Activated B cell treated with CpG ODN at 0.5 μM for 24 hours (primary cell): ENCODE measurements at regions of chr2 and their contacts with region 1.

Region 1: GRCh38 chr2:157468931-157469708 is 25.2 kb upstream of the CYTIP start:
- DNase-seq: no peak
- ATAC-seq: peak; percentile 81
- H3K4me3 Mint-ChIP-seq: peak overlapping the region; percentile 81
- H3K27ac Mint-ChIP-seq: peak overlapping the region; percentile 99
- H3K4me1 Mint-ChIP-seq: peaks cover 87% of the 10 kb centered on the region
- H3K27me3 Mint-ChIP-seq: no peaks in the 10 kb centered on the region
- CTCF ChIP-seq: no peak

Region 2: GRCh38 chr2:157245846-157246764 is 223.0 kb before region 1 on chr2:
- CTCF ChIA-PET with region 1: no interaction called
- POLR2A ChIA-PET with region 1: no interaction called
- intact Hi-C with region 1: no loop called
- DNase-seq: no peak
- ATAC-seq: no peak
- H3K4me3 Mint-ChIP-seq: no peak overlapping the region
- H3K27ac Mint-ChIP-seq: no peak overlapping the region
- H3K4me1 Mint-ChIP-seq: no peaks in the 10 kb centered on the region
- H3K27me3 Mint-ChIP-seq: no peaks in the 10 kb centered on the region
- CTCF ChIP-seq: no peak

Region 3: DNA sequence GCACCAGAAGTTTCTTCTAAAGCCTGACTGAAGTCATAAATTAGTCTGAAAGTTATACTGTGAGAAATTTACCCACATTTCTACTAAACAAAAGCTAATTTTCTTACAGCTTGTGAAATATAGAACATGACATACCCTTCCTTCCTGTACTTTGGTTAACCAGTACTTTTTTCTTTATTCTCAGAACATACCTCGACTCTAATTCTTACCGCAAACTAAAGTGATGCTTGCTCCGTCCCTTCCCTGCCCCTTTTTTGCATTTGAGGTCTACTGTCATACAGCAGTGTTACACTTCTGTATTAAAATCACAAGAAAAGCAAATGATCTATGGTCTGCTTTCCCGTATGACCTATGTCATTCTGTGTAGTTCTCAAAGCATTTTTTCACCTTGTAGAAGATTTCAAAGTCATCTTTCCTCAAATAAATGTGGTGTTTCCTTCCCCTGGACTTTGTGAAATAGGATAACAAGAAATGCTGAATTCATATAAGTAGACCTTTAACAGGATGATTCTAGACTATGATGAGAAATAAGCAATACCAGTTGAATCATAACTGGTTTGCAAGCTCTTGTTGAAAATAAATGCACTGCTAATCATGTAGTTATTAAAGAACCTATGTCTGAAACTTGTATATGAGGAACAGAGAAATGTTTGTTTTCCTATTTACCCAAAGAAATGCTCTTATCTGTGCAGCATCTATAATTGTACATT is 55.6 kb before region 1 on chr2:
- CTCF ChIA-PET with region 1: no interaction called
- POLR2A ChIA-PET with region 1: interaction called, 9 read pairs
- intact Hi-C with region 1: loop called (anchors 1 kb)
- DNase-seq: no peak
- ATAC-seq: peak; percentile 80
- H3K4me3 Mint-ChIP-seq: peak overlapping the region; percentile 42
- H3K27ac Mint-ChIP-seq: peak overlapping the region; percentile 84
- H3K4me1 Mint-ChIP-seq: peaks cover 79% of the 10 kb centered on the region
- H3K27me3 Mint-ChIP-seq: no peaks in the 10 kb centered on the region
- CTCF ChIP-seq: no peak

Region 4: DNA sequence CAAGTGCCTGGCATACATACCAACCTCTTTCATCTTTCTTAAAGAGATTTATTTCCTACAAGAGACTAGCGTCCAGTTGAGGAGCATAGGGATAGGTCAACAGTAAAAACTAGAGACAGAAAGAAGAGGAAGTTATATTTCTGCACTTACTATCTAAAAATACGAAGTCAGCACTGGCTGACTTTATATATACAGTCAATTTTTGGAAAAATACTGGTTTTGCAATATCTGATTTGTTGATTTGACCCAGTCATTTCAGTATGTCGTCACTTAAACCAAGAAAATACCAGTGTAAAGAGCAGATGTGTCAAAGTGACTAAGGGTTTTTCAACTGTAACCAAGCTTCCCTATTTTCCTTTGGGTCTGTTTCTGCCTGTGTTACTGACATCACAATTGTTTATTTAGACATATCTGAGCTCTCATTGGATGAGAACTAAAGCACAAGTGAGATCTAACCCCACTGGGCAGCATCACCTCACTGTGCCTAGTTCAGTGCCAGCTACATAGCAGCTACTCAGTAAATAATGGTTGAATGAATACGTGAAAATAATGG is 48.3 kb before region 1 on chr2:
- CTCF ChIA-PET with region 1: interaction called, 3 read pairs
- POLR2A ChIA-PET with region 1: interaction called, 36 read pairs
- intact Hi-C with region 1: loop called (anchors 1 kb)
- DNase-seq: no peak
- ATAC-seq: peak; percentile 73
- H3K4me3 Mint-ChIP-seq: peak overlapping the region; percentile 63
- H3K27ac Mint-ChIP-seq: peak overlapping the region; percentile 90
- H3K4me1 Mint-ChIP-seq: peaks cover 58% of the 10 kb centered on the region
- H3K27me3 Mint-ChIP-seq: no peaks in the 10 kb centered on the region
- CTCF ChIP-seq: no peak

Region 5: GRCh38 chr2:157427003-157427921 is 41.9 kb before region 1 on chr2:
- CTCF ChIA-PET with region 1: no interaction called
- POLR2A ChIA-PET with region 1: interaction called, 36 read pairs
- intact Hi-C with region 1: no loop called
- DNase-seq: no peak
- ATAC-seq: peak; percentile 37
- H3K4me3 Mint-ChIP-seq: no peak overlapping the region
- H3K27ac Mint-ChIP-seq: peak overlapping the region; percentile 71
- H3K4me1 Mint-ChIP-seq: peaks cover 51% of the 10 kb centered on the region
- H3K27me3 Mint-ChIP-seq: no peaks in the 10 kb centered on the region
- CTCF ChIP-seq: no peak

Region 6: GRCh38 chr2:157480182-157480961 is 11.3 kb after region 1 on chr2:
- CTCF ChIA-PET with region 1: no interaction called
- POLR2A ChIA-PET with region 1: interaction called, 8 read pairs
- intact Hi-C with region 1: loop called (anchors 1 kb)
- DNase-seq: no peak
- ATAC-seq: no peak
- H3K4me3 Mint-ChIP-seq: no peak overlapping the region
- H3K27ac Mint-ChIP-seq: peak overlapping the region; percentile 30
- H3K4me1 Mint-ChIP-seq: peaks cover 22% of the 10 kb centered on the region
- H3K27me3 Mint-ChIP-seq: no peaks in the 10 kb centered on the region
- CTCF ChIP-seq: no peak

Region 7: GRCh38 chr2:157849591-157849990 is 380.5 kb after region 1 on chr2:
- CTCF ChIA-PET with region 1: no interaction called
- POLR2A ChIA-PET with region 1: no interaction called
- intact Hi-C with region 1: no loop called
- DNase-seq: no peak
- ATAC-seq: no peak
- H3K4me3 Mint-ChIP-seq: no peak overlapping the region
- H3K27ac Mint-ChIP-seq: no peak overlapping the region
- H3K4me1 Mint-ChIP-seq: no peaks in the 10 kb centered on the region
- H3K27me3 Mint-ChIP-seq: no peaks in the 10 kb centered on the region
- CTCF ChIP-seq: no peak